Heart left ventricle (tissue), 16 donors: ENCODE measurements at regions of chr19 and their contacts with region 1.

Region 1: GRCh38 chr19:35882114-35882832 is 13.9 kb downstream of the APLP1 start:
- DNase-seq: peak in 1 of 5 donors; percentile 39
- ATAC-seq: peak in 2 of 4 donors; percentile 40 to 44
- H3K4me3 ChIP-seq: no peak overlapping the region
- H3K27ac ChIP-seq: no peak overlapping the region
- H3K4me1 ChIP-seq: peaks cover 0 to 8% (median 0%) of the 10 kb centered on the region in 12 donors
- H3K27me3 ChIP-seq: no peaks in the 10 kb centered on the region
- CTCF ChIP-seq: peak; percentile 33 to 72 (median 60)
- POLR2A ChIP-seq: no peak

Region 2: GRCh38 chr19:35775298-35776110 is 106.8 kb before region 1 on chr19 and contains the start of gene ARHGAP33:
- intact Hi-C with region 1: loop called in 2 of 10 experiments (anchors 10 kb)
- DNase-seq: peak; percentile 99 to 100 (median 99)
- ATAC-seq: peak; percentile 98 to 99 (median 98)
- H3K4me3 ChIP-seq: peak within 1 kb of the TSS; percentile 68 to 99 (median 92)
- H3K27ac ChIP-seq: peak within 1 kb of the TSS in 6 of 12 donors; percentile 1 to 77 (median 44)
- H3K4me1 ChIP-seq: peaks cover 0 to 17% (median 5%) of the 10 kb centered on the region in 12 donors
- H3K27me3 ChIP-seq: no peaks in the 10 kb centered on the region
- CTCF ChIP-seq: no peak
- POLR2A ChIP-seq: peak in 1 of 2 donors; percentile 27
- total RNA-seq, gene ARHGAP33: 0.50 to 7.8 (median 5.7) TPM

Region 3: GRCh38 chr19:35856546-35857149 is 25.6 kb before region 1 on chr19 and contains the start of gene KIRREL2:
- intact Hi-C with region 1: no loop called
- DNase-seq: no peak
- ATAC-seq: peak in 2 of 4 donors; percentile 35 to 51
- H3K4me3 ChIP-seq: peak within 1 kb of the TSS; percentile 21 to 63 (median 48)
- H3K27ac ChIP-seq: no peak within 1 kb of the TSS
- H3K4me1 ChIP-seq: peaks cover 0 to 22% (median 11%) of the 10 kb centered on the region in 12 donors
- H3K27me3 ChIP-seq: peaks cover 26 to 95% (median 63%) of the 10 kb centered on the region in 9 donors
- CTCF ChIP-seq: no peak
- POLR2A ChIP-seq: no peak
- total RNA-seq, gene KIRREL2: 0.77 TPM in 1 of 9 donors, not detected in the others

Region 4: DNA sequence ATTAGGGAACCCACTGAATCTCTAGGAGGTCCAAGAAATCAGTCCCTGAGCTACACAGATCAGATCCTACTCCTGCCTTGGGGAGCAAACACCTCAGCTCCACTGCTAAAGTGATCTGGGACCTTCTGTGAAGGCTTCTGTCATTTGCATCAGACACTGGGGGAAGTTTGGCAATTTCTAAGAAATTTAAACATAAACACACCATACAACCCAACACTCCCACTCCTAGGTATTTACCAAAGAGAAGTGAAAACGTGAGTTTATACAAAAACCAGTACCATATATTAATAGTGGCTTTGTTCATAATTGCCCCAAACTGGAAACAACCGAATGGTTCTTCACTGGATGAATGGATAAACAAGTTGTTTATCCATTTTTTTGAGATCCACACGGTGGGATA is 33.2 kb after region 1 on chr19:
- intact Hi-C with region 1: no loop called
- DNase-seq: no peak
- ATAC-seq: no peak
- H3K4me3 ChIP-seq: no peak overlapping the region
- H3K27ac ChIP-seq: peak overlapping the region in 1 of 12 donors; percentile 21
- H3K4me1 ChIP-seq: peaks cover 0 to 39% (median 0%) of the 10 kb centered on the region in 12 donors
- H3K27me3 ChIP-seq: no peaks in the 10 kb centered on the region
- CTCF ChIP-seq: no peak
- POLR2A ChIP-seq: no peak